PC-9 (cell line): ENCODE measurements at regions of chr5 and their contacts with region 1.

Region 1: DNA sequence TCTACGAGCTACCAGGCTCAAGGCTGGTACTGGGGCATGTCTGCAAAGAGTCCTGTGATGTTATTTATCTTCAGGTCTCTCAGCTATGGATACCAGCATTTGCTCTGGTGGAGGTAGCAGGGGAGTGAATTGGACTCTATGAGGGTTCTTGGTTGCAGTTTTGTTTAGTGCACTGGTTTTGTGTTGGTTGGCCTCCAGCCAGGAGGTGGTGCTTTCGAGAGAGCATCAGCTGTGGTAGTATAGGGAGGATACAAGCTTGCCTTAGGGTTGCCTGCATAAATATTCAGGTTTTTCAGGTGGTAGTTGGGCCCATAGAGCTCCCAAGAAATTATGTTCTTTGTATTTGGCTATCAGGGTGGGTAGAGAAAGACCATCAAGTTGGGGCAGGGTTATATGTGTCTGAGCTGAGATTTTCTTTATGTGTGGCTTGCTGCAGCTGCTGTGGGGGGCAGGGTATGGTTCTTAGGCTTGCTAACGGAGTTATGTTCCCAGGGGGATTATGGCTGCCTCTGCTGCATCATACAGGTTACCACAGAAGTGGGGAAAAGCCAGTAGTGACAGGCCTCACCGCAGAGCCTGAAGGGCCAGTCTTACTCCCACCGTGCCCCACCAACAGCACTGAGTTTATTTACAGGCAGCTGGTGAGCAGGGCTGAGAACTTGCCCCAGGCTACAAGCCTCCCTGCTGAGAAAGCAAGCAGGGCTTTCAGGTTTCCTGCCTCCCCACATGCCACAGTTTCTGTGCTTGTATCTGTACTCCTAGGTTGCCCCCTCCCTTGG is 9.7 kb upstream of the RIOK2 start:
- DNase-seq: peak; percentile 76 to 98
- H3K4me3 ChIP-seq: peak overlapping the region; percentile 43; the same call in 1 of the 2 replicates
- H3K27ac ChIP-seq: peak overlapping the region; percentile 89
- H3K4me1 ChIP-seq: peaks cover 28% of the 10 kb centered on the region
- H3K27me3 ChIP-seq: no peaks in the 10 kb centered on the region
- CTCF ChIP-seq: no peak

Region 2: GRCh38 chr5:97250113-97250512 is 57.3 kb after region 1 on chr5:
- CTCF ChIA-PET with region 1: no interaction called
- POLR2A ChIA-PET with region 1: interaction called, 15 read pairs
- intact Hi-C with region 1: no loop called
- DNase-seq: no peak
- H3K4me3 ChIP-seq: no peak overlapping the region
- H3K27ac ChIP-seq: no peak overlapping the region
- H3K4me1 ChIP-seq: no peaks in the 10 kb centered on the region
- H3K27me3 ChIP-seq: no peaks in the 10 kb centered on the region
- CTCF ChIP-seq: no peak

Region 3: GRCh38 chr5:97458851-97459250 is 266.1 kb after region 1 on chr5:
- CTCF ChIA-PET with region 1: no interaction called
- POLR2A ChIA-PET with region 1: no interaction called
- intact Hi-C with region 1: no loop called
- DNase-seq: no peak
- H3K4me3 ChIP-seq: no peak overlapping the region
- H3K27ac ChIP-seq: no peak overlapping the region
- H3K4me1 ChIP-seq: no peaks in the 10 kb centered on the region
- H3K27me3 ChIP-seq: no peaks in the 10 kb centered on the region
- CTCF ChIP-seq: no peak